ENCODE measurements at regions of chr10 and their contacts with region 1.

Region 1: GRCh38 chr10:44932517-44933450 is 21.6 kb downstream of the TMEM72 start:
- DNase-seq: peak; percentile 83
- ATAC-seq: peak; percentile 96
- H3K4me3 ChIP-seq: no peak overlapping the region
- H3K4me3 Mint-ChIP-seq: no peak overlapping the region
- H3K27ac ChIP-seq: no peak overlapping the region
- H3K27ac Mint-ChIP-seq: no peak overlapping the region
- H3K4me1 ChIP-seq: peaks cover 0 to 8% of the 10 kb centered on the region in 2 donors
- H3K4me1 Mint-ChIP-seq: no peaks in the 10 kb centered on the region
- H3K27me3 ChIP-seq: no peaks in the 10 kb centered on the region
- H3K27me3 Mint-ChIP-seq: no peaks in the 10 kb centered on the region
- CTCF ChIP-seq: peak; percentile 92

Region 2: DNA sequence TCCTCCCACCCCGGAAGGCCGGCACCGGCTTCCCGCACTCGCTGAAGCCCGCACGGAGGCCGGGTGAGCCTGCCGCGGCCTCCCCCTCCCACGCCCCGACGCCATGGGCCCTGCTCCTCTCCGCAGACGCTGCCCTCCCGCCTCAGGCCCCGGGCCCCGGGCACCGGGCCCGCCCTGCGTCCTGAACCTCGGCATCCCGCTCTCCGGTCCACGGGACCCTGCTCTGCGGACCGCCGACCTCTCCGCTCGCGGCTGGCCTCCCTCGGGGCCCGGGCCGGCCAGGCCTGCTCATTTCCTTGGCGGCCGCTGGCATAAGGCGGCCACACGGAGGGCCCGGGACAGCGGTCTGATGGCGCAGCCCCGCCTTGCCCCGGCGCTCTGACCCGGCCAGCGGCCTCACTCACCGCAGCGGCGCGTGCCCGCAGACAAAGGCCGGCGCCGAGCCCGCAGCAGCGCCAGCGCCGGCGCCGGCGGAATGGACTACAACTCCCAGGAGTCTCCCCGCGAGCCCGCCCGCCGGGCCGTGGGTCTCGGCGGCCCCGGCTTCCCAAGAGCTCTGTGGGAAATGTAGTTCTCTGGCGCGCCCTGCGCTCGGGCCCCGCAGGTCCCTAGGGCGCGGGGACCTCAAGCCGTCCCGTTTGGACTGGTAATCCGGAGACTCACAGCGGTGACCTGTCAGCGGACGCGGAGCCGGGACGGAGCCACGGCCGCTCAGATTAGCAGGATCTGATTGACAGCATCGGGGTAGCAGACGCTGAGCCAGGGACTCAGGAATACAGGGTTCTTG is 1284.2 kb before region 1 on chr10 and contains the start of gene ZNF32:
- CTCF ChIA-PET with region 1: no interaction called
- POLR2A ChIA-PET with region 1: no interaction called
- intact Hi-C with region 1: no loop called
- DNase-seq: peak; percentile 89
- ATAC-seq: peak; percentile 99
- H3K4me3 ChIP-seq: peak within 1 kb of the TSS; percentile 22 to 82 (median 63)
- H3K4me3 Mint-ChIP-seq: peak within 1 kb of the TSS; percentile 98
- H3K27ac ChIP-seq: peak within 1 kb of the TSS in 1 of 2 donors; percentile 86
- H3K27ac Mint-ChIP-seq: peak within 1 kb of the TSS; percentile 89
- H3K4me1 ChIP-seq: peaks cover 7 to 13% of the 10 kb centered on the region in 2 donors
- H3K4me1 Mint-ChIP-seq: peaks cover 16% of the 10 kb centered on the region
- H3K27me3 ChIP-seq: peaks cover 0 to 6% (median 0%) of the 10 kb centered on the region in 4 experiments
- H3K27me3 Mint-ChIP-seq: peaks cover 10% of the 10 kb centered on the region
- CTCF ChIP-seq: no peak
- total RNA-seq, gene ZNF32: 29.6 and 35.8 TPM in 2 replicates

Region 3: DNA sequence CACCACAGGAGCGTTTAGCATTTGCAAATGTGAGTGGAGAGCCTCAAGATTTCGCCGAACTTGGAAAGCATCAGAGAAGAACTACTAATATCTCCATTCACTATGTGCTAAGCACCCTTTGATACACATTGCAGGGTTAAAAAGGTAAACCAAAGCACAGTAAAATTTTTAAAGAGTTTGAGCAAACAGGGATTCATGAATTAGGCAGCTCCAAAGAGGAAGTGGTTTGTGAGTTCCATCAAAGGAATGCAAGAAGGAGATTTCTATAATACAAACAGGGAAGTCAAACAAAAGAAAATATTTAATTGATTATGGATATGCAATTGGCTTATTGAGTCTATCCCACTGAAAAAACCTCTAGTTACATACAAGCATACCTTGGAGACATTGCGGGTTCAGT is 102.8 kb before region 1 on chr10:
- CTCF ChIA-PET with region 1: no interaction called
- POLR2A ChIA-PET with region 1: no interaction called
- intact Hi-C with region 1: no loop called
- DNase-seq: no peak
- ATAC-seq: no peak
- H3K4me3 ChIP-seq: no peak overlapping the region
- H3K4me3 Mint-ChIP-seq: no peak overlapping the region
- H3K27ac ChIP-seq: no peak overlapping the region
- H3K27ac Mint-ChIP-seq: no peak overlapping the region
- H3K4me1 ChIP-seq: no peaks in the 10 kb centered on the region
- H3K4me1 Mint-ChIP-seq: no peaks in the 10 kb centered on the region
- H3K27me3 ChIP-seq: no peaks in the 10 kb centered on the region
- H3K27me3 Mint-ChIP-seq: peaks cover 6% of the 10 kb centered on the region
- CTCF ChIP-seq: no peak

Region 4: GRCh38 chr10:44947371-44948152 is 14.8 kb after region 1 on chr10:
- CTCF ChIA-PET with region 1: interaction called, 29 read pairs
- POLR2A ChIA-PET with region 1: no interaction called
- intact Hi-C with region 1: no loop called
- DNase-seq: peak; percentile 75
- ATAC-seq: peak; percentile 71
- H3K4me3 ChIP-seq: no peak overlapping the region
- H3K4me3 Mint-ChIP-seq: peak overlapping the region; percentile 36
- H3K27ac ChIP-seq: no peak overlapping the region
- H3K27ac Mint-ChIP-seq: no peak overlapping the region
- H3K4me1 ChIP-seq: peaks cover 27 to 46% of the 10 kb centered on the region in 2 donors
- H3K4me1 Mint-ChIP-seq: peaks cover 43% of the 10 kb centered on the region
- H3K27me3 ChIP-seq: no peaks in the 10 kb centered on the region
- H3K27me3 Mint-ChIP-seq: no peaks in the 10 kb centered on the region
- CTCF ChIP-seq: no peak

Region 5: GRCh38 chr10:44952779-44953231 is 20.0 kb after region 1 on chr10:
- CTCF ChIA-PET with region 1: interaction called, 29 read pairs
- POLR2A ChIA-PET with region 1: no interaction called
- intact Hi-C with region 1: no loop called
- DNase-seq: no peak
- ATAC-seq: no peak
- H3K4me3 ChIP-seq: no peak overlapping the region
- H3K4me3 Mint-ChIP-seq: no peak overlapping the region
- H3K27ac ChIP-seq: no peak overlapping the region
- H3K27ac Mint-ChIP-seq: no peak overlapping the region
- H3K4me1 ChIP-seq: peaks cover 21 to 30% of the 10 kb centered on the region in 2 donors
- H3K4me1 Mint-ChIP-seq: peaks cover 36% of the 10 kb centered on the region
- H3K27me3 ChIP-seq: no peaks in the 10 kb centered on the region
- H3K27me3 Mint-ChIP-seq: no peaks in the 10 kb centered on the region
- CTCF ChIP-seq: no peak

Region 6: GRCh38 chr10:44959247-44960087 is 26.7 kb after region 1 on chr10 and contains the start of gene RASSF4:
- CTCF ChIA-PET with region 1: interaction called, 23 read pairs
- POLR2A ChIA-PET with region 1: no interaction called
- intact Hi-C with region 1: loop called (anchors 1 kb)
- DNase-seq: peak; percentile 90
- ATAC-seq: peak; percentile 99
- H3K4me3 ChIP-seq: peak within 1 kb of the TSS; percentile 34 to 95 (median 85)
- H3K4me3 Mint-ChIP-seq: peak within 1 kb of the TSS; percentile 91
- H3K27ac ChIP-seq: peak within 1 kb of the TSS; percentile 49 to 75
- H3K27ac Mint-ChIP-seq: peak within 1 kb of the TSS; percentile 84
- H3K4me1 ChIP-seq: peaks cover 33 to 48% of the 10 kb centered on the region in 2 donors
- H3K4me1 Mint-ChIP-seq: peaks cover 47% of the 10 kb centered on the region
- H3K27me3 ChIP-seq: peaks cover 0 to 2% (median 0%) of the 10 kb centered on the region in 4 experiments
- H3K27me3 Mint-ChIP-seq: no peaks in the 10 kb centered on the region
- CTCF ChIP-seq: no peak
- total RNA-seq, gene RASSF4: 1.4 and 2.6 TPM in 2 replicates

Region 7: DNA sequence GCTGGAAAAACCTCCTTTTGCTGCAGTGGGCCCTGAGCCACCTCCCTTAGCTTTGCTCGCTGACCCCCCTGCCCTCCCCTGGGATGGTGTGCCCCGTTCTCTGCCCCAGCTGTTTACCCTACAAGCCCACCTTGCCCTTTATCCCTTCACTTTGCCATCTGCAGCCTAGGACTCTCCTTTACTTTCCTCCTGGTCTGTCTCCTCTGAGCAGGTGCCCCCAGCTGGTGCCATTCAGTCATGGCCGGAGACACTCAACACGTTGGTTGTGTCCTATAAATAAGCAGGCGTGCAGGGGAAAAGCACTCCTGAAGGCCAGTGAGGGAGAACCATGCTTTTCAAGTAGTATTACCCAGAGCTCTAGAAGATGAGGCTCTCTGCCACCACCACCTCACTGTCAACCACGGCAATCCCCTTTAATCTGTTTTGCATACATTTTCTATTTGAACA is 32.9 kb after region 1 on chr10:
- CTCF ChIA-PET with region 1: interaction called, 24 read pairs
- POLR2A ChIA-PET with region 1: no interaction called
- intact Hi-C with region 1: no loop called
- DNase-seq: no peak
- ATAC-seq: no peak
- H3K4me3 ChIP-seq: no peak overlapping the region
- H3K4me3 Mint-ChIP-seq: no peak overlapping the region
- H3K27ac ChIP-seq: no peak overlapping the region
- H3K27ac Mint-ChIP-seq: peak overlapping the region; percentile 42
- H3K4me1 ChIP-seq: peaks cover 46 to 70% of the 10 kb centered on the region in 2 donors
- H3K4me1 Mint-ChIP-seq: peaks cover 67% of the 10 kb centered on the region
- H3K27me3 ChIP-seq: peaks cover 0 to 2% (median 0%) of the 10 kb centered on the region in 4 experiments
- H3K27me3 Mint-ChIP-seq: no peaks in the 10 kb centered on the region
- CTCF ChIP-seq: no peak